ENCODE measurements at regions of chr1 and their contacts with region 1.

Region 1: GRCh38 chr1:182084487-182085316 is 23.2 kb upstream of the ZNF648 start:
- DNase-seq: peak; percentile 95
- ATAC-seq: peak; percentile 91
- H3K4me3 Mint-ChIP-seq: no peak overlapping the region
- H3K27ac Mint-ChIP-seq: peak overlapping the region; percentile 55; the same call in 1 of the 2 replicates
- H3K4me1 Mint-ChIP-seq: peaks cover 14% of the 10 kb centered on the region
- H3K27me3 Mint-ChIP-seq: no peaks in the 10 kb centered on the region
- CTCF ChIP-seq: peak; percentile 70

Region 2: DNA sequence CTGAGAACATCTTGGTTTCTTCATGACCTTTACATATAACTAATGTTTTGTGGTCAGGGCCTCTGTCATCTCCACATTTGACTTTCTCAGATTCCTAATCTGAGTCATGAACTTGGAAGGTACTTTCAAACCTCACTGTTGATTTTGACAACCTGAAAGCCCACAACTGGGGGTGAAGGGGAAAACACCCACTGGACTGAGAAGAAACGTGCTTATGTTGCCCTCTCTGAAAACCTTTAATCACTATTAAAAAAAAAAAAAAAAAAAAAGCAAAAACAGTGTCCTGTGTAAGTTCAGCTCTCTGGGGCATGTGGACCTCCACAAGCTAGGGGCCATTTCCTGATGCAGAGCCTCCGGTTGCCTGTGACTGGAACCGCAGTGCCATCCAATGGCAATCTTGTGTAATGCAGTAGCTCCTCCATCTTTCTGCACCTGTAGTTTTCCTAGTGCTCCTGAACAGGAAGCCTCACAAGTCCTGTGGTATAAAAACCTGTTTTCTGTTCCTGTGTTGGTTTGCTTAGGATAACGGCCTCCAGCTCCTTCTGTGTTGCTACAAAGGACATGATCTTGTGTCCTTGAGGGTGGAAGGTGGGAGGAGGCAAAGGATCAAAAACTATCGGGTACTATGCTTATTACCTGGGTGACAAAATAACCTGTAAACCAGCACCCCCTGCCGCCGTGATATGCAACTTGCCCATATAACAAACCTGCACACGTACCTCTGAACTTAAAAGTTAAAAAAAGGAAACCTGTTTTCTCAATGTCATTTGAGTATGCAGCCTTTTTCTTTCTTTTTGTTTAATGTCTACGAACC is 147.7 kb before region 1 on chr1:
- CTCF ChIA-PET with region 1: interaction called, 41 read pairs
- POLR2A ChIA-PET with region 1: interaction called, 3 read pairs
- DNase-seq: peak; percentile 80
- ATAC-seq: peak; percentile 99
- H3K4me3 Mint-ChIP-seq: peak overlapping the region; percentile 37; the same call in 1 of the 2 replicates
- H3K27ac Mint-ChIP-seq: no peak overlapping the region
- H3K4me1 Mint-ChIP-seq: no peaks in the 10 kb centered on the region
- H3K27me3 Mint-ChIP-seq: no peaks in the 10 kb centered on the region
- CTCF ChIP-seq: peak; percentile 72; the same call in 1 of the 2 replicates

Region 3: DNA sequence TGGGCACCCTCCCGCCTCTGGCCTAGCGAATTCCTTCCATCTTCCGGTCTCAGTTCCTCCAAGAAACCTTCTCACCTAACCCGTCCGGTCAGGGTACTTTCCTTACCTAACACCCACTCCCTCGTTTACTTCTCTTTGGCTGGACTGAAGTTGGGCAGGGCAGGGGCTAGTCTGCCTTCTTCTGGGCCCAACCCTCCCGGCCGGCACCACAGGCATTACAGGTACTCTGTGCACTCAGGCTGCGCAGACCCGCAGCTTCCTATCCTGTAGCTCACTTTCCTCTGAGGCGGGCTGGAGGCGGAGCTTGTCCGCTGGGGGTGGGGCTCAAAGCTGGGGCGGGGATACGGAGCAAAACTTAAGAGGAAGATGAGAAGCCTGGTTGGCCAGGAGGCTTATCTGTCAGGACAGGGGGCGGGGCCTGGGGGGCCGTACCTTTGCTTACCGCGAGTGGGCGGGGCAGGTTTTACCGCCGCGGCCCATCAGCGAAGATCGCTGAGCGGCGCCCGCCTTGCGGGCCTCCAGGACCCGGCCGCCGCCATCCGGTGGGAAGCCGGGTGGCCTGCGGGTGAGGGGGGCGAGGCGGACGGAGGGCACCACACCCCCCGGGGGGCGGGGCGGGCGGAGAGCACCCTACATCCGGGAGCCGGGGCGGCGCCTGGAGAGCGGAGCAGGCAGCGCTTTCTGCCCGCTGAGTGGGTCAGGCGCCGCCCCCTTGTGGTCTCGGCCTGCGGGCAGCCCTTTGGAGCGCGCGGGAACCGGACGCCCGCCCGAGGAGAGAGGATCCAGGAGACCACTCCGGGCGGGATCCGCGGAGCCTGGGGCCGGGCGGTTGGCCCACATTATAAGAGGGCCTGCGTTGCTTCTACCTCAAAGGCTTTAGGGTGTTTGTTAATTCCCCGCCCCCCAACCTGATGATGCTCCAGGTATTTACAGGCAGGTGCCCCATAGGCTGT is 55.0 kb before region 1 on chr1:
- CTCF ChIA-PET with region 1: interaction called, 11 read pairs
- POLR2A ChIA-PET with region 1: no interaction called
- DNase-seq: peak; percentile 99
- ATAC-seq: peak; percentile 95
- H3K4me3 Mint-ChIP-seq: peak overlapping the region; percentile 97
- H3K27ac Mint-ChIP-seq: peak overlapping the region; percentile 100
- H3K4me1 Mint-ChIP-seq: peaks cover 13% of the 10 kb centered on the region
- H3K27me3 Mint-ChIP-seq: no peaks in the 10 kb centered on the region; the same call in 1 of the 2 replicates
- CTCF ChIP-seq: peak; percentile 35; the same call in 1 of the 2 replicates

Region 4: GRCh38 chr1:182061594-182061993 is 23.1 kb before region 1 on chr1 and contains the start of gene ZNF648:
- CTCF ChIA-PET with region 1: interaction called, 10 read pairs
- POLR2A ChIA-PET with region 1: no interaction called
- DNase-seq: no peak
- ATAC-seq: peak; percentile 85
- H3K4me3 Mint-ChIP-seq: no peak within 1 kb of the TSS
- H3K27ac Mint-ChIP-seq: no peak within 1 kb of the TSS
- H3K4me1 Mint-ChIP-seq: no peaks in the 10 kb centered on the region
- H3K27me3 Mint-ChIP-seq: peaks cover 15% of the 10 kb centered on the region
- CTCF ChIP-seq: no peak
- total RNA-seq, gene ZNF648: 0.17 to 0.46 TPM (median 0.27 TPM) in 3 replicates

Region 5: GRCh38 chr1:182143154-182143657 is 58.5 kb after region 1 on chr1:
- CTCF ChIA-PET with region 1: interaction called, 58 read pairs
- POLR2A ChIA-PET with region 1: no interaction called
- DNase-seq: peak; percentile 95
- ATAC-seq: peak; percentile 82
- H3K4me3 Mint-ChIP-seq: no peak overlapping the region
- H3K27ac Mint-ChIP-seq: no peak overlapping the region
- H3K4me1 Mint-ChIP-seq: peaks cover 19% of the 10 kb centered on the region
- H3K27me3 Mint-ChIP-seq: no peaks in the 10 kb centered on the region
- CTCF ChIP-seq: peak; percentile 95

Region 6: DNA sequence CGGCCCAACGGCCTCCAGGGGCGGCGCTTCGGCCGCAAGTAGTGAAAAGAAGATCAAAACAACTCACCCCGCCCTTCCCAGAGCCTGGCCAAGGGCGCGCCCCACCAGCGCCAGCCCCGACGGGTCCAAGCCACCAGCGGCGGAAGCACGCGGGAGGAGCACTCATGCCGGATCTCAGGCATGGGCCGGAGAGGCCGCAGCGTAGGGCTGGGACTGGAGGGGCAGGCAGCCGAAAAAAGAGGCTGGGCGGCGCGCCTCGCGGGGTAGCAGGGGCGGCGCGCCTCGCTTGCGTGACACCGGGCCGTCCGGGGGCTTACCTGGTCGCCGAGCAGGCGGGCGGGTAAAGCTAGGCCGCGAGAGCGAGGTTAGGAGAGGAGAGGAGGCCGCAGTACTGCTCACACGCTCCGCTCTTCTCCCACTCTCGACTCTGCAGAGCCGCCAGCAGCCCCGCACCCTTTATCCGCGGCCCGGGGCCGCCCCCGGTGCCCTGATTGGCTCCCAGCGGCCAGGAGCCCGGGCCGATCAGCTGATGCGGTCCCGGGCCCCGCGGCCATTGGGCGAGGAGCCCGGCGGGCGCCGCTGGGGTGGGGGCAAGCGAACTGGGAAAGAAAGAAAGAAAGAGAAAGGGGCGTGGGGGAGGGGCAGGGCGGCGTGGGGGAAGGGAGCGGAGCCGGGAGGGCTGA is 306.8 kb after region 1 on chr1 and contains the start of gene GLUL:
- CTCF ChIA-PET with region 1: interaction called, 40 read pairs
- POLR2A ChIA-PET with region 1: interaction called, 4 read pairs
- DNase-seq: peak; percentile 95
- ATAC-seq: peak; percentile 93
- H3K4me3 Mint-ChIP-seq: peak within 1 kb of the TSS; percentile 97
- H3K27ac Mint-ChIP-seq: peak within 1 kb of the TSS; percentile 87
- H3K4me1 Mint-ChIP-seq: peaks cover 41% of the 10 kb centered on the region
- H3K27me3 Mint-ChIP-seq: no peaks in the 10 kb centered on the region
- CTCF ChIP-seq: no peak
- total RNA-seq, gene GLUL: 240 to 284 TPM (median 269 TPM) in 3 replicates